ENCODE measurements at regions of chr3 and their contacts with region 1.

Region 1: DNA sequence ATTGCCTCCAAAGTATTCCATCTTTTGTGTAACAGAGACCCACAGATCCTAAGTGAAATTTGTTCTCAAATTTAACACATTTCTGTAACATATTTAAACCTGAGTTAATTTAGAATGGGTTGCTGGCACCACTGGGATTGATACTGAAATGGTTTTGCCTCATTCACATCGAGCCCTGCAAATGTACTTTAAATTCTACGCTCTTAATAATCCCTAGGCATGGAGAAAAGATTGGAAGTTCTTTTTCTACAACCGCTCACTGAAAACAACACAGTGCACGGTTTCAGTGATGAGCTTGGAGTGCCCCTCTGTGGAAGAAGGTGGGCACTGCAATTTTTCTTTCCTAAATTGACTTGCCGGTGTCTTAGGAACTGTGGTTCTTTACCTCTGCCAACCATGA is 109.9 kb upstream of the ATP11B start:
- DNase-seq: peak; percentile 72 to 81
- H3K4me3 ChIP-seq: peak overlapping the region; percentile 74; the same call in 1 of the 2 replicates
- H3K27ac ChIP-seq: no peak overlapping the region
- H3K4me1 ChIP-seq: peaks cover 17% of the 10 kb centered on the region
- H3K27me3 ChIP-seq: no peaks in the 10 kb centered on the region
- CTCF ChIP-seq: peak; percentile 99

Region 2: DNA sequence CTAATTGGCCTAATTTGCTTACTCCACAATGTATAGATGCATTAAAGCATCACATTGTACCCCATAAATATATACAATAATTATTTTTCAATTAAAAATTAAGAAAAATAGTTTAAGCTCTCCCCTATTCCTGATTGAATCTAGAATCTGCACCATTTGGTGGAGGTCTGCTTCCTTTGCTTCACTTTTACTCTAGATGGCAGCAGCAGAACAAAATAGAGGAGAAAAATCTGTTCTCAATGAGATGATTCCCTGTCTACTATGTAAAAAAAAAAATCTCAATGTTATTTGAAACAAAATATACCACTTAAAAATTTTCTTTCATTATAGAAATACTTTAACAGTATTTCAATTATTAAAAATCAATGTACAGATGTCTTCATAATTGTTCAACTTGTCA is 1880.6 kb before region 1 on chr3:
- CTCF ChIA-PET with region 1: no interaction called
- POLR2A ChIA-PET with region 1: no interaction called
- intact Hi-C with region 1: loop called (anchors 1 kb)
- DNase-seq: no peak
- H3K4me3 ChIP-seq: no peak overlapping the region
- H3K27ac ChIP-seq: no peak overlapping the region
- H3K4me1 ChIP-seq: no peaks in the 10 kb centered on the region
- H3K27me3 ChIP-seq: no peaks in the 10 kb centered on the region
- CTCF ChIP-seq: peak; percentile 70

Region 3: GRCh38 chr3:180989291-180990163 is 1693.9 kb before region 1 on chr3 and contains the start of gene DNAJC19:
- CTCF ChIA-PET with region 1: no interaction called
- POLR2A ChIA-PET with region 1: no interaction called
- intact Hi-C with region 1: loop called (anchors 10 kb)
- DNase-seq: peak; percentile 95 to 98
- H3K4me3 ChIP-seq: peak within 1 kb of the TSS; percentile 76
- H3K27ac ChIP-seq: peak within 1 kb of the TSS; percentile 68
- H3K4me1 ChIP-seq: peaks cover 16% of the 10 kb centered on the region
- H3K27me3 ChIP-seq: no peaks in the 10 kb centered on the region
- CTCF ChIP-seq: no peak
- total RNA-seq, gene DNAJC19: 85.6 and 86.9 TPM in 2 replicates

Region 4: GRCh38 chr3:181210275-181210674 is 1473.2 kb before region 1 on chr3:
- CTCF ChIA-PET with region 1: interaction called, 4 read pairs
- POLR2A ChIA-PET with region 1: no interaction called
- intact Hi-C with region 1: loop called (anchors 1 kb)
- DNase-seq: no peak
- H3K4me3 ChIP-seq: no peak overlapping the region
- H3K27ac ChIP-seq: no peak overlapping the region
- H3K4me1 ChIP-seq: no peaks in the 10 kb centered on the region
- H3K27me3 ChIP-seq: no peaks in the 10 kb centered on the region
- CTCF ChIP-seq: peak; percentile 72

Region 5: DNA sequence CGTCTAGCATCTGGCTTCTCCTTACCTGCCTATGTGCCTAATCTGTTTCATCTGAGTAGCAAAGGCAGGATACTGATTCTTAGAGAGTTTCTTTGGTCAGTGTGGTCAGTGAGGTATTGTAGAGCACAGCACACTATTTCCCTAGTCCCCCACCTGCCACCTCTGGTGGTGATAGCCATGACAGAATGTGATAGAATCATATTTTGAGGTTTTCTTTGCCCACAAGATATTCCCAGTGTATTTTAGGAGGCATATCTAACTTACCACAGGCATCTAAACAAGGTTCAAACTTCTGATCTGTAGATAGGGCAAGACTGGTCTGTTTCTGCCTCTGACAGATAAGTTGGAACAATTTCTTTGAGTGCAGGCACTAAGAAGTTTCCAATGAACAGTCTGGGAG is 783.8 kb before region 1 on chr3:
- CTCF ChIA-PET with region 1: no interaction called
- POLR2A ChIA-PET with region 1: no interaction called
- intact Hi-C with region 1: loop called (anchors 10 kb)
- DNase-seq: peak; percentile 64 to 66
- H3K4me3 ChIP-seq: no peak overlapping the region
- H3K27ac ChIP-seq: no peak overlapping the region
- H3K4me1 ChIP-seq: no peaks in the 10 kb centered on the region
- H3K27me3 ChIP-seq: no peaks in the 10 kb centered on the region
- CTCF ChIP-seq: no peak

Region 6: DNA sequence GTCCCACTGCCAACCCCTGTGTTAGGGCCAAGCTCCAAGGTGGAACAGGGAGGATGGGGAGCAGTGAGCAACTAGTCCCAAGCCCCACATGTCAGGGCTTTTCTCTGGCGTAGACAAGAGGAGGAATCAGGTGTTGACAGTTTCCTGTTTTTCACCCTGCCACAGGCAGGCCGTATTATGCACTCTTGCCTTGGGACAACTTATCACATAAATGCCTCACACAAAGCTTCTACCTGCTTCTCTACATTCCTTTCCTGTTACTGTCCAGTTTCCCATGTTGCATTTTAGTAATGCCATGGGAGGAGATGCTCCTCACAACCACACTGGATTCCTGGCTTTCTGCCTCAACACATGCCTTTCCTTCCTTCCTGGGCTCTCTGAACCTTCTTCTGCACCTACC is 271.4 kb before region 1 on chr3:
- CTCF ChIA-PET with region 1: no interaction called
- POLR2A ChIA-PET with region 1: no interaction called
- intact Hi-C with region 1: no loop called
- DNase-seq: peak; percentile 67 to 95
- H3K4me3 ChIP-seq: no peak overlapping the region
- H3K27ac ChIP-seq: peak overlapping the region; percentile 50
- H3K4me1 ChIP-seq: peaks cover 15% of the 10 kb centered on the region
- H3K27me3 ChIP-seq: no peaks in the 10 kb centered on the region
- CTCF ChIP-seq: no peak

Region 7: GRCh38 chr3:182490596-182491491 is 192.6 kb before region 1 on chr3:
- CTCF ChIA-PET with region 1: interaction called, 3 read pairs
- POLR2A ChIA-PET with region 1: no interaction called
- intact Hi-C with region 1: loop called (anchors 2 kb)
- DNase-seq: peak; percentile 12 to 37
- H3K4me3 ChIP-seq: no peak overlapping the region
- H3K27ac ChIP-seq: no peak overlapping the region
- H3K4me1 ChIP-seq: peaks cover 3% of the 10 kb centered on the region; the same call in 1 of the 2 replicates
- H3K27me3 ChIP-seq: no peaks in the 10 kb centered on the region
- CTCF ChIP-seq: peak; percentile 74

Region 8: GRCh38 chr3:182697345-182697919 is 14.0 kb after region 1 on chr3:
- CTCF ChIA-PET with region 1: no interaction called
- POLR2A ChIA-PET with region 1: no interaction called
- intact Hi-C with region 1: no loop called
- DNase-seq: no peak
- H3K4me3 ChIP-seq: no peak overlapping the region
- H3K27ac ChIP-seq: no peak overlapping the region
- H3K4me1 ChIP-seq: no peaks in the 10 kb centered on the region
- H3K27me3 ChIP-seq: no peaks in the 10 kb centered on the region
- CTCF ChIP-seq: no peak

Measured in PC-9 (cell line).